Heart right ventricle (tissue), 16 donors: ENCODE measurements at regions of chr18 and their contacts with region 1.

Region 1: DNA sequence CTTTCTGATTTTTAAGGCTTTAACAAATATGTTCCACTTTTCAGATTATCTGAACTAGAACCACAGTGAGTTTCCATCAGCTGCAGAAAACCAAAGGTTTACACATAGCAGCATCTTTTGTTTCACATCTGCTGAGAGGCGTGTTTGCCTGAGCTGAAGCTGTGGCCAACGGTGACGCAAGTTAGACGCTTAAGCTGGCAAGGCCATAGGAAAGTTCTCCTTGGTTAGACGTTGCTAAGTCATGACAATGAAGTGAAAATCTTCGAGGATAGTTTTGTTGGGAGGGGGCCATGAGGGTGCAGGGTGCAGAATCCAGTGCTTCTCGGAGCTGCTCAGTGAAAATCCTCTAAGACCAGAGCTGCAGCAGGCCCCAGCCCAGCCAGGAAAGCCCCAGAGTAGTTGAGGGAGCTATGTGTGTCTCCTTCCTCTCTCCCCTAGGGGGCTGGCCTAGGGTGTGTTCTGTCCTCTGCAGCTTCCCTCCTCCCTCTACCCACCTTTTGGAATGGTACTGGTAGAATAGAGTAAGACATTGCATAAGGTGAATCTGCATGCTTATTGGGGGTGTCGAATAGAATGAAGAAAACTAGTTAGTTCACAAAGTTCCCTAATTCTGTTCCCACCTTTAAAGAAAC is 105.4 kb downstream of the FHOD3 start:
- DNase-seq: peak; percentile 67 to 77
- ATAC-seq: peak; percentile 52 to 82 (median 72)
- H3K4me3 ChIP-seq: no peak overlapping the region
- H3K27ac ChIP-seq: peak overlapping the region; percentile 46 to 83 (median 79)
- H3K4me1 ChIP-seq: peaks cover 0 to 82% (median 47%) of the 10 kb centered on the region in 9 donors
- H3K27me3 ChIP-seq: no peaks in the 10 kb centered on the region
- CTCF ChIP-seq: peak in 3 of 9 donors; percentile 14 to 34 (median 26)

Region 2: GRCh38 chr18:36333414-36333813 is 69.5 kb before region 1 on chr18:
- intact Hi-C with region 1: loop called in 2 of 10 experiments (anchors 10 kb)
- DNase-seq: no peak
- ATAC-seq: no peak
- H3K4me3 ChIP-seq: no peak overlapping the region
- H3K27ac ChIP-seq: peak overlapping the region in 5 of 10 donors; percentile 2 to 60 (median 31)
- H3K4me1 ChIP-seq: peaks cover 0 to 73% (median 27%) of the 10 kb centered on the region in 9 donors
- H3K27me3 ChIP-seq: peaks cover 0 to 3% (median 0%) of the 10 kb centered on the region in 7 donors
- CTCF ChIP-seq: no peak